CD8-positive, alpha-beta memory T cell (primary cell): ENCODE measurements at regions of chr13 and their contacts with region 1.

Region 1: DNA sequence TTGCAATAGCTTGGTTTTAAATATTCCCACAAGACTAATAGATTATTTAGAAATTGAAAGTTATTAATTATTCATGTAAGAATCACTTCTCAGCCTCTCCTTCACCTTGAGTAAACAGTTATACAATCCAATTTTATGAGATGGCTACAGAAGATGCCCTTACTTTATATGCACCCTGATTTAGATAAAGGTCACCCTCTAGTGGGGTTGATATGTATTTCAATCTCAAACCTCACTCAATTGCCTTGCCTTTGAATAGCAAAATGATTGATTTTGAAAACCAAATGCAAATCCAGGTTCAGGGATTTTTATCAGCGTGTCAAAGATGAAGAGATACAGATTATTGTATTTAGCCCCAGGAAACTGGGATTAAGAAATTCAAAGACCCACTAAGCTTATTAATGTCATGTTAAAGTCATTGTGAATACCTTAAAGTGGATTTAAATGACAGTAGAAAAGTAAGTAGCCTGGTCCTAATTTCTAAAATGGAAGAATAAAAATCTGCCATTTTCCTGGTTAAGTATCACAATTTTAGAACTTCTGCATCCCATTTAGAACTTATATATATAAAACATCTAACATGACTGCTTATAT is 305.1 kb downstream of the ITGBL1 start:
- DNase-seq: peak in 2 of 5 donors; percentile 5 to 7
- H3K4me3 ChIP-seq: no peak overlapping the region
- H3K4me3 Mint-ChIP-seq: no peak overlapping the region
- H3K27ac ChIP-seq: no peak overlapping the region
- H3K27ac Mint-ChIP-seq: no peak overlapping the region
- H3K4me1 ChIP-seq: no peaks in the 10 kb centered on the region
- H3K4me1 Mint-ChIP-seq: no peaks in the 10 kb centered on the region
- H3K27me3 ChIP-seq: no peaks in the 10 kb centered on the region
- H3K27me3 Mint-ChIP-seq: peaks cover 1 to 32% of the 10 kb centered on the region in 2 donors

Region 2: DNA sequence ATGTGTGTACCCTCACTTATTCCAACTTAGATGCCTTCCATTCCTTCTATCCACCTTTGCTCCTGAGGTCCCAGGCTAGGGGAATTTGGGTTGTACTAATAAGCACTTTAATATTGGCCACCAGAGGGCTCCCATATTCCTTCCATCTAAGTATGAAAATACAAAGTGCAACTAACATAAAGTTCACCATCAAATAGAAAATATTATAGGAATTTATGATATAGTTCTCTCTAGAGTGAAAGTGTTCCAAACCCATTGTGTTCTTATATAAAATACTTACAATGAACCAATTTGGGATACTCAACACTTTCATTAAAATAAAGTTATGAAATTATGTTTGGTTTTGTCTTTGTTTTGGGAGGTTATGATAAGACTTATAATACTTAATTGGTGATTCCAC is 242.8 kb before region 1 on chr13:
- CTCF ChIA-PET with region 1: interaction called, 16 read pairs
- POLR2A ChIA-PET with region 1: no interaction called
- DNase-seq: peak in 2 of 5 donors; percentile 9 to 23
- H3K4me3 ChIP-seq: no peak overlapping the region
- H3K4me3 Mint-ChIP-seq: no peak overlapping the region
- H3K27ac ChIP-seq: no peak overlapping the region
- H3K27ac Mint-ChIP-seq: no peak overlapping the region
- H3K4me1 ChIP-seq: no peaks in the 10 kb centered on the region
- H3K4me1 Mint-ChIP-seq: peaks cover 10 to 17% (median 16%) of the 10 kb centered on the region in 3 donors
- H3K27me3 ChIP-seq: no peaks in the 10 kb centered on the region
- H3K27me3 Mint-ChIP-seq: peaks cover 0 to 10% of the 10 kb centered on the region in 2 donors

Region 3: DNA sequence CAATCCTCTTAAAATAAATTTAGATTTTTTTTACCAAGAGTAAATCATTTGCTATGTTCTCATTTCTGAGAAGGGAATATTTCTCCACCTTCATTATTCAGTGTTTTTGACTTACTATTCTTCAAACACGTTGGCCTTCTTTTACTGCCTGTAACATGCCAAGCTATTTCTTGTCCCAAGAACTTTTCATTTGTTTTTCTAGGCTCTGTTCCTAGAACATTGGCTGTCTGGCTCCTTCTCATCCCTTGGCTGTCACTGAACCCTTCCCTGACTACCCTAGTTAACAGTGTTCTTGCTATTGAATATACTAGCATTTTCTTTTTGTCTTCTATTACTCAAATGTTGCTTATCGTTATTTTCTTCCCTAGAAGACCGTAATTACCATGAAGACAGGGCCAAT is 56.9 kb before region 1 on chr13:
- CTCF ChIA-PET with region 1: no interaction called
- POLR2A ChIA-PET with region 1: no interaction called
- DNase-seq: no peak
- H3K4me3 ChIP-seq: no peak overlapping the region
- H3K4me3 Mint-ChIP-seq: no peak overlapping the region
- H3K27ac ChIP-seq: no peak overlapping the region
- H3K27ac Mint-ChIP-seq: no peak overlapping the region
- H3K4me1 ChIP-seq: no peaks in the 10 kb centered on the region
- H3K4me1 Mint-ChIP-seq: no peaks in the 10 kb centered on the region
- H3K27me3 ChIP-seq: no peaks in the 10 kb centered on the region
- H3K27me3 Mint-ChIP-seq: peaks cover 3 to 8% of the 10 kb centered on the region in 2 donors